ENCODE measurements at regions of chr2 and their contacts with region 1.

Region 1: GRCh38 chr2:28387082-28387960 is 5.3 kb upstream of the FOSL2 start:
- DNase-seq: peak; percentile 61
- H3K4me3 ChIP-seq: no peak overlapping the region
- H3K27ac ChIP-seq: peak overlapping the region; percentile 81
- H3K4me1 ChIP-seq: peaks cover 42% of the 10 kb centered on the region
- H3K27me3 ChIP-seq: no peaks in the 10 kb centered on the region
- CTCF ChIP-seq: no peak
- POLR2A ChIP-seq: no peak

Region 2: DNA sequence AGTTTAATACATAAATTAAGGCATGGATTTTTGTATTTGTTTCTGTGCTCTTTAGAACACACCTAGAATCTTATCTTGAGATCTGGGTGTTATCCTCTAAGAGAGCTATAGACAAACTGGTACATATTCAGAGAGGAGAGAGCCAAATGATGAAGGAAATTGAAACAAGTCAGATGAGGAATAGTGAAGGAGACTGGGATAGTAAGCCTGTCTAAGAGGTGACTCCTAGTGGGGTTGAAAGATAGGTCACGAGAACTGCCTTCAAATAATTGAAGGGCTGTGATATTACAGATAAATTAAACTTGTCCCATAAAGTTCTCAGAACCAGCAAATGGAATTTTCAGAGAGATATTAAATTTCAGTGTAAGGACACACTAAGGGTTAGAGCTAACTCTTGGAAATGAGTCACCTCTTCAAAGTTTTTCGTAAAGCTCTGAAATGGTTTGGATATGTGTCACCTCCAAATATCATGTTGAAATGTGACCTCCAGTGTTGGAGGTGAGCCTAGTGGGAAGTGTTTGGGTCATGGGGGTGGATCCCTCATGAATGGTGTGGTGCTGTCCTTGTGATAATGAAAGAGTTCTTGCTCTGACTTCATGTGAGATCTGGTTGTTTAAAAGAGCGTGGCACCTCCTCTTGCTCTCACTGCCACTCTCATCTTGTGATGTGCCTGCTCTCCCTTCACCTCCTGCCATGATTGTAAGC is 409.6 kb before region 1 on chr2:
- CTCF ChIA-PET with region 1: no interaction called
- POLR2A ChIA-PET with region 1: no interaction called
- dilution Hi-C with region 1: no loop called
- intact Hi-C with region 1: loop called (anchors 1 kb)
- DNase-seq: peak; percentile 76
- H3K4me3 ChIP-seq: no peak overlapping the region
- H3K27ac ChIP-seq: peak overlapping the region; percentile 68
- H3K4me1 ChIP-seq: peaks cover 25% of the 10 kb centered on the region
- H3K27me3 ChIP-seq: no peaks in the 10 kb centered on the region
- CTCF ChIP-seq: no peak
- POLR2A ChIP-seq: peak; percentile 31

Region 3: DNA sequence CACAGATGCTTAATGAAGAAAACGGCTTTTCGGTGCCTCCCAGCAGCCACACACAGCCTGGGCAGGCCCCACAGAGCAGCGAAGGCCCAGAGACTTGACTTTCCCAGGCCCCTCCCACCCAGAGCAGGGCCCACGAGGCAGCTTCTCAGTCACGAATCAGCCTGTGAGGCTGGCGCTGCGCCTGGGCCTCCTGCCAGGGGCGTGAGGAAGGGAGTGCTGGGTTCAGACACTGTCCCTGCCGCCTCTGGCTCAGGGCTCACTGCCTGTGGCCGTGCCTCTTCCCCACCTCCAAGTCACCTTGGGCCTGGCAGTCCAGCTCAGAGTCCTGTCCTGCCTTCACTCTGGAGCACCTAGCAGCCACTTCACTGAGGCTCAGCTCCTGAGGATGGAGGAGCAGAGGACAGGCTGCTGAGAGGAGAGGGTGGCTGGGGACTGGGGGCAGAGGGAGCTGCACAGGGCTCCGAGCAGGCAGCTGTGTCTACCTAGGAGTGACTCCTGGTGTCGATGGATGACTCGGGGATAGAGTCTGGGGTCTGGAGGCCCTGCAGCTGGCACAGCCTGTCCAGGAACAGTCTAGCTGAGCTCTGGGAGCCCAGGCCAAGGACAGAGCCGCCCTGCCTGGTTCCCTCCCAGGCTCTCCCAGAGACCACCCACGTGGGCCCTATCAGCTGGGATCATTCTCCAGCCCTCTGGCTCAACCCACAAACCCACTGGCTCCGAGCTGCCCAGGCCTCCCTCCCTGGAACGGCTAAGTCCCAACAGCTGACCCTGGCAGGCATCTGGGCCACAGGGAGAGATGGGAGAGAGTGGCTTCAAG is 31.0 kb before region 1 on chr2:
- CTCF ChIA-PET with region 1: interaction called, 10 read pairs
- POLR2A ChIA-PET with region 1: interaction called, 4 read pairs
- dilution Hi-C with region 1: no loop called
- intact Hi-C with region 1: loop called (anchors 1 kb)
- DNase-seq: peak; percentile 89
- H3K4me3 ChIP-seq: no peak overlapping the region
- H3K27ac ChIP-seq: peak overlapping the region; percentile 80
- H3K4me1 ChIP-seq: peaks cover 37% of the 10 kb centered on the region
- H3K27me3 ChIP-seq: no peaks in the 10 kb centered on the region
- CTCF ChIP-seq: no peak
- POLR2A ChIP-seq: no peak

Region 4: DNA sequence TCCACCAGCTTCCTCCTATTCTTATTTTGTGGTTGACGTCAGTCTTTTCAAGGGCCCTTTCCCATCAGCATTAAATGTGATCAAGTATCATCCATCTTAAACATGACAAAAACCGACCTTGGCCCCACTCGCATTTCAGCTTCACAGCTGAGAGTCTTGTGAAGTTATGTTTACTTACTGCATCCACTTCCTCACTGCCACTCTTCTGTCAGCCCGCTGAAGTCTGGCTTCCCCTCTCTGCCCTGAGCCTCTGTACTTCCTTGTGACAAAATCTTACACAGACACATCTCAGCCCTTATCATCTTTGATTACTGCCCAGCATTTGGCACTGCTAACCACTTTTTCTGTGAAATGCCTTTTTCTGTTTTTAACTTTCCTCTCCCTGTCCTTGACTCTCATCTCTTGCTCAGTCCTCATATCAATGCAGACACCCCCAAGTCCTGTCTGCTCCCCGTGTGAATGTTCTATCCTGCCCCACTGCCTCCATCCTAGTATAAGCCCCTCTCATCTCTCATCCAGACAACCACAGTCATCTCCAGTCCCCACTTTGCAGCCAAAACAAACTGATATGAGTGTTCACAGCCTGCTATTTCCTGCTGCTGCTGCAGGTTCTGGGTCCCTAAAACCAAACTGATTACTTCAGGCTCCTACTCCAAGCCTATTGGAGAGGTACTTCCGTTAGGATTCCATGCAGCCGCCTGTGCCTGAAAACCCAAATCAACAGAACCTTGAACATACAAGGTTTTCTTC is 36.7 kb after region 1 on chr2:
- CTCF ChIA-PET with region 1: no interaction called
- POLR2A ChIA-PET with region 1: no interaction called
- dilution Hi-C with region 1: no loop called
- intact Hi-C with region 1: no loop called
- DNase-seq: no peak
- H3K4me3 ChIP-seq: no peak overlapping the region
- H3K27ac ChIP-seq: peak overlapping the region; percentile 41
- H3K4me1 ChIP-seq: peaks cover 14% of the 10 kb centered on the region
- H3K27me3 ChIP-seq: no peaks in the 10 kb centered on the region
- CTCF ChIP-seq: no peak
- POLR2A ChIP-seq: no peak

Region 5: GRCh38 chr2:28495551-28496250 is 108.4 kb after region 1 on chr2 and contains the start of gene PLB1:
- CTCF ChIA-PET with region 1: no interaction called
- POLR2A ChIA-PET with region 1: no interaction called
- dilution Hi-C with region 1: no loop called
- intact Hi-C with region 1: no loop called
- DNase-seq: no peak
- H3K4me3 ChIP-seq: no peak within 1 kb of the TSS
- H3K27ac ChIP-seq: no peak within 1 kb of the TSS
- H3K4me1 ChIP-seq: no peaks in the 10 kb centered on the region
- H3K27me3 ChIP-seq: peaks cover 4 to 10% of the 10 kb centered on the region in 2 experiments
- CTCF ChIP-seq: no peak
- POLR2A ChIP-seq: no peak
- total RNA-seq, gene PLB1: 0.80 and 1.1 TPM in 2 replicates

Region 6: GRCh38 chr2:28855193-28855592 is 467.9 kb after region 1 on chr2:
- CTCF ChIA-PET with region 1: no interaction called
- POLR2A ChIA-PET with region 1: no interaction called
- dilution Hi-C with region 1: no loop called
- intact Hi-C with region 1: no loop called
- DNase-seq: no peak
- H3K4me3 ChIP-seq: no peak overlapping the region
- H3K27ac ChIP-seq: no peak overlapping the region
- H3K4me1 ChIP-seq: no peaks in the 10 kb centered on the region
- H3K27me3 ChIP-seq: no peaks in the 10 kb centered on the region
- CTCF ChIP-seq: no peak
- POLR2A ChIP-seq: no peak

Measured in endothelial cell of umbilical vein (primary cell).